CD8-positive, alpha-beta memory T cell (primary cell): ENCODE measurements at regions of chr22 and their contacts with region 1.

Region 1: DNA sequence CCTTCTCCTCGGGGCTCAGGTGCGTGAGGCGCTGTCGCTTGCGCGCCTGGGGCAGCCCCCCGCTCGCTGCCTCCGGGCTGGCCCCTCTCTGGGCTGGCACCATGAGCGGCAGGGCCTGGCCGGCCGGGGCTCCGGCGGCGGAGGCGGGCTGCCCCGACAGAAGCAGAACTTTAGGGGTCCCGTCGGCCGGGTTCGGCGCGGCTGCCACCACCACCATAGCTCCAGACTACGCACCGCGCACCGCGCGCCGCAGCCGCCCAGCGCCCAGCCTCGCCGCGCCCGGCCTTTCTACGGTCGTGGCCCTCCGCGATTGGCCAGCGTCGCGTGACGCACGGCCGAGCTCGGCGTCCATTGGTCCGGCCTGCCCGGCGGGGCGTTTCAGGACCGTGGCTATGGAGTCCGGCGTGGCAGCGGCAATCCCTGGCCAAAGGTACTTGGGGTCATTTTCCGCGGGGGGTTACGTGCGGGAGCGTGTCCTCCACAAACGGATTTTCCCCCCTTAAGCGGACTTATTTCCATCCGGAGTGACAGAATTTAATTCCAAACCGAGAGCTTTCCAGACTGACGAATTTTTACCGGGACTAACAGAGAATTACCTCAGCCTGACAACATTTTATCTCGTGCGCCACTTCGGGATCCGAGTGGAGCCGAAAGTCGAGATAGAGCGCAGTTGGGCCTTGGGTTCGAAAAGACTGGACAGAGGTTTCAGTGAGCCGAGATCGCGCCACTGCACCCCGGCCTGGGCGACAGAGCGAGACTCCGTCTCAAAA is at the start of gene XBP1:
- DNase-seq: peak; percentile 85 to 92 (median 90)
- H3K4me3 ChIP-seq: peak within 1 kb of the TSS; percentile 99
- H3K4me3 Mint-ChIP-seq: peak within 1 kb of the TSS; percentile 84 to 97 (median 95)
- H3K27ac ChIP-seq: peak within 1 kb of the TSS; percentile 100
- H3K27ac Mint-ChIP-seq: peak within 1 kb of the TSS; percentile 96 to 100 (median 100)
- H3K4me1 ChIP-seq: peaks cover 42% of the 10 kb centered on the region
- H3K4me1 Mint-ChIP-seq: peaks cover 58 to 62% (median 62%) of the 10 kb centered on the region in 3 donors
- H3K27me3 ChIP-seq: no peaks in the 10 kb centered on the region
- H3K27me3 Mint-ChIP-seq: peaks cover 0 to 4% of the 10 kb centered on the region in 2 donors
- total RNA-seq, gene XBP1: 67.3 to 71.4 TPM

Region 2: DNA sequence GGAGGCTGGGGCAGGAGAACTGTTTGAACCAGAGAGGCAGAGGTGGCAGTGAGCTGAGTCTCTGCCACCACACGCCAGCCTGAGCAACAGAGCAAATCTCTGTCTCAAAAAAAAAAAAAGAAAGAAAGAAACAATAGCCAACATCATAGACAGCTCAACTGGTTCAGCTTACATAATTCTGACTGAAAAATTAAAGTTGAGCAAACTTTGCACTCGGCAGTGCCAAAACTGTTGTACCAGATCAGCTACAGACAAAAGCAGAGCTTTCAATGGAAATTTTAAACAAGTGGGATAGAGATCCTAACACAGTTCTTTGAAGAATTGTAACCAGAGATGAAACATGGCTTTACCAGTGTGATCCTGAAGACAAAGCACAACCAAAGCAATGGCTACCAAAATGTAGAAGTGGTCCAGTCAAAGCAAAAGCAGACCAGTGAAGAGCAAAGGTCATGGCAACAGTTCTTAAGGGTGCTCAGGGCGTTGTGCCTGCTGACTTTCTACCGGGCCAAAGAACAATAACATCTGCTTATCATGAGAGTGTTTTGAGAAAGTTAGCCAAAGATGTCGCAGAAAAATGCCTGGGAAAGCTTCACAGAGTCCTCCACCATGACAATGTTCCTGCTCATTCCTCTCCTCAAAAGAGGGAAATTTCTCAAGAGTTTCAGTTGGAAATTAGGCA is 180.1 kb before region 1 on chr22:
- CTCF ChIA-PET with region 1: no interaction called
- POLR2A ChIA-PET with region 1: no interaction called
- DNase-seq: no peak
- H3K4me3 ChIP-seq: no peak overlapping the region
- H3K4me3 Mint-ChIP-seq: no peak overlapping the region
- H3K27ac ChIP-seq: no peak overlapping the region
- H3K27ac Mint-ChIP-seq: no peak overlapping the region
- H3K4me1 ChIP-seq: no peaks in the 10 kb centered on the region
- H3K4me1 Mint-ChIP-seq: no peaks in the 10 kb centered on the region
- H3K27me3 ChIP-seq: peaks cover 17% of the 10 kb centered on the region
- H3K27me3 Mint-ChIP-seq: peaks cover 10 to 54% of the 10 kb centered on the region in 2 donors

Region 3: DNA sequence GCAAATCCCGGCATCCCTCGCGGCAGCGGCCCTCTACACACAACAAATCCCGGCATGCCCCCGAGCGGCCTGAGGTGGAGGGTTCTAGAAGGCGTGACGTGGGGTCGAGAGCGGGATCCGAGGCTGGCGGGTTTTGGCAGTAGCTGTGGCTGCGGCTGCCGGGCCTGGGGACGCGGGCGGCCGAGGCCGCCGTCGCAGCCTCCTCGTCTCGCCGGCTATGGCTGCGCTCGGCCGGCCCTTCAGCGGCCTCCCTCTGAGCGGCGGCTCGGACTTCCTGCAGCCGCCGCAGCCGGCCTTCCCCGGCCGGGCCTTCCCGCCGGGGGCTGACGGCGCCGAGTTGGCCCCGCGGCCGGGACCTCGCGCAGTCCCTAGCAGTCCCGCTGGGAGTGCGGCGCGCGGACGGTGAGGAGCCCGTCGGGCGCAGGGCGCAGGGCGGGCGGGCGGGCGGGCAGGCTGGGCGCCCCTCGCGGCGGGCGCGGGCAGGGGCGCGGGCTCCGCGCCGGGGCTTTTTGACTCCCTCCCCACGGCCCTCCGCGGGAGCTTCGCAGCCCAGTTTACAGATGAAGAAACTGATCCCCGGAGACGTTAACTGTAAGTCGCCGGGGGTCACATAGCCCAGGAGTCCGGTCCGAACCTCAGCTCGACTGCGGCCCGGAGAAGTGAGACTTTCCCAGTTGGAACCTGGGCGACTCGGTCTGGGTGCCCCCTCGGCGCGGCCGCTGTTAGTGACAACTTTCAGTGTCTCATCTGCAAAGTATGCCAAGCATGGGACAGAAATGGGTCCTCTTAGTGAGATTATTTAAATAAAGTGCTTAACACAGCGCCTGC is 27.6 kb before region 1 on chr22 and contains the start of gene CCDC117:
- CTCF ChIA-PET with region 1: interaction called, 7 read pairs
- POLR2A ChIA-PET with region 1: interaction called, 21 read pairs
- DNase-seq: peak; percentile 86 to 94 (median 89)
- H3K4me3 ChIP-seq: peak within 1 kb of the TSS; percentile 78
- H3K4me3 Mint-ChIP-seq: peak within 1 kb of the TSS; percentile 90 to 99 (median 98)
- H3K27ac ChIP-seq: peak within 1 kb of the TSS; percentile 94
- H3K27ac Mint-ChIP-seq: peak within 1 kb of the TSS; percentile 77 to 99 (median 96)
- H3K4me1 ChIP-seq: peaks cover 24% of the 10 kb centered on the region
- H3K4me1 Mint-ChIP-seq: peaks cover 25 to 37% (median 35%) of the 10 kb centered on the region in 3 donors
- H3K27me3 ChIP-seq: no peaks in the 10 kb centered on the region
- H3K27me3 Mint-ChIP-seq: no peaks in the 10 kb centered on the region
- total RNA-seq, gene CCDC117: 20.9 to 24.6 TPM

Region 4: DNA sequence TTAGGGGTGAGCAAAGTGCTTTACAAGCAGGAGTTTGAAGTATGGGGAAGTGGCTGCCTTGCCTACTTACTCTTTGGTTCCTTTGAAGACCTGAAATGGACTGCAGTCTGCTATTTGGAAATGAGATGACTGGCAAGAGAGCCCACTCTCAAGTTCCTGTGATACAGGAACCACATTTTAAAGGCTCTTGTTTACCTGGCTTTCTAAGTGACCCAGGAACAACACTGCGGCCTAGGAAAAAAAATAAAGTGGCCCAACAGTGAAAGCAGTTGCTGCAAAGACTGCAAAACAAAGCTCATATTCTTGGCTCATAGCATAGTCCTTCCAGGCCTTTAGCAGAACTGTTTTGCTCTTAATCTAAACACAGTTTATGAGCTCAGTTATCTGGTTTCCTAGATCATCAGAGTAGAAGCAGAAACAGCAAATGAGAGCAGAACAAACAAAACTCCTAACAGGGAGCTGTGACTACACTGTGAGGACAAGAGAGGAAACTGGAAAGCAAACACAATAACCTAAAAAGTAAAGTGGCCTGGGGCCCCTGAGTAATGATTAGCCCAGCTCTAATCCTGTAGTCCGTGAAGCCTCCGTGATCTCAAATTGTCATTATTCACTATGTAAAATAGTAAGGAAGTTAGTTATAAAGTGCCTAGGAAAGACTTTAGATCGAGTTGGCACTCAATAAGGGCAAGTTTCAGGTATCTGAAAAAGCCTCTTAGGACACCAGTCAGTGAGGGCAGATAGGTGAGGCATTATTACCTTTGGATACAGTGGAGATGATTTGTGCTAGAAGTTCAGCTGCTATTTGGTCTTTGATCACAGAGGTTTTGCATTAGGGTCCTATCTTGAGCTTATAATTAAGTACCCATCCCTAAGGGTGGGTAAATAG is 16.5 kb before region 1 on chr22:
- CTCF ChIA-PET with region 1: interaction called, 4 read pairs
- POLR2A ChIA-PET with region 1: interaction called, 12 read pairs
- DNase-seq: no peak
- H3K4me3 ChIP-seq: no peak overlapping the region
- H3K4me3 Mint-ChIP-seq: no peak overlapping the region
- H3K27ac ChIP-seq: no peak overlapping the region
- H3K27ac Mint-ChIP-seq: peak overlapping the region in 4 of 8 donors; percentile 21 to 51 (median 28)
- H3K4me1 ChIP-seq: no peaks in the 10 kb centered on the region
- H3K4me1 Mint-ChIP-seq: peaks cover 21 to 25% (median 24%) of the 10 kb centered on the region in 3 donors
- H3K27me3 ChIP-seq: no peaks in the 10 kb centered on the region
- H3K27me3 Mint-ChIP-seq: no peaks in the 10 kb centered on the region

Region 5: GRCh38 chr22:28810821-28811491 is 10.5 kb after region 1 on chr22:
- CTCF ChIA-PET with region 1: interaction called, 9 read pairs
- POLR2A ChIA-PET with region 1: interaction called, 41 read pairs
- DNase-seq: peak; percentile 16 to 68 (median 62)
- H3K4me3 ChIP-seq: peak overlapping the region; percentile 13
- H3K4me3 Mint-ChIP-seq: peak overlapping the region; percentile 74 to 89 (median 88)
- H3K27ac ChIP-seq: peak overlapping the region; percentile 3
- H3K27ac Mint-ChIP-seq: peak overlapping the region; percentile 73 to 97 (median 92)
- H3K4me1 ChIP-seq: peaks cover 74% of the 10 kb centered on the region
- H3K4me1 Mint-ChIP-seq: peaks cover 68 to 86% (median 81%) of the 10 kb centered on the region in 3 donors
- H3K27me3 ChIP-seq: no peaks in the 10 kb centered on the region
- H3K27me3 Mint-ChIP-seq: no peaks in the 10 kb centered on the region

Region 6: GRCh38 chr22:28882878-28883656 is 82.6 kb after region 1 on chr22 and contains the start of gene ZNRF3:
- CTCF ChIA-PET with region 1: interaction called, 3 read pairs
- POLR2A ChIA-PET with region 1: interaction called, 10 read pairs
- DNase-seq: peak; percentile 81 to 91 (median 86)
- H3K4me3 ChIP-seq: peak within 1 kb of the TSS; percentile 89
- H3K4me3 Mint-ChIP-seq: peak within 1 kb of the TSS; percentile 83 to 95 (median 88)
- H3K27ac ChIP-seq: no peak within 1 kb of the TSS
- H3K27ac Mint-ChIP-seq: peak within 1 kb of the TSS; percentile 58 to 90 (median 69)
- H3K4me1 ChIP-seq: peaks cover 16% of the 10 kb centered on the region
- H3K4me1 Mint-ChIP-seq: peaks cover 22 to 33% (median 24%) of the 10 kb centered on the region in 3 donors
- H3K27me3 ChIP-seq: peaks cover 10% of the 10 kb centered on the region
- H3K27me3 Mint-ChIP-seq: peaks cover 7 to 24% of the 10 kb centered on the region in 2 donors
- total RNA-seq, gene ZNRF3: 1.0 to 1.2 TPM

Region 7: DNA sequence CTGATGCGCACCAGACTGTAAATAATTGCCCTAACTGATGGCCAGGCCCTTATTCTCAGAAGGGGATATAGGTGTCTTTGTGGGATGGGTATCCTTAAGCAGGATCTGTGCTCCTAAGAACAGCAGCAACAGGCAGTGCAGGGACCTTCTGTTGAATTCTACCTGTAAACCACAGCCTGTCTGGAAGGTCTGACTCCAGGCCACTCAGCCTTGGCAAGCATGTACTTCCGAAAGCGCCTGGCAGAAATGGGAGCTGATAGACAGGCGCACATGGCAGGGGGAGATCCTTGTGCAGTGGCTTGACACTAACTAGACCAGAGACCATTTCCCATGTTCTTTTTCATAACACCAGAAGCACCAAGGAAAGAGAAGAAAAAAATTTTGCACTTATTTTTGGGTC is 202.1 kb after region 1 on chr22:
- CTCF ChIA-PET with region 1: no interaction called
- POLR2A ChIA-PET with region 1: no interaction called
- DNase-seq: no peak
- H3K4me3 ChIP-seq: no peak overlapping the region
- H3K4me3 Mint-ChIP-seq: no peak overlapping the region
- H3K27ac ChIP-seq: no peak overlapping the region
- H3K27ac Mint-ChIP-seq: peak overlapping the region in 1 of 8 donors; percentile 3
- H3K4me1 ChIP-seq: no peaks in the 10 kb centered on the region
- H3K4me1 Mint-ChIP-seq: no peaks in the 10 kb centered on the region
- H3K27me3 ChIP-seq: no peaks in the 10 kb centered on the region
- H3K27me3 Mint-ChIP-seq: peaks cover 7 to 22% of the 10 kb centered on the region in 2 donors